ENCODE measurements at regions of chr5 and their contacts with region 1.

Region 1: GRCh38 chr5:173972925-173973615 is 15.9 kb upstream of the C5orf47 start:
- DNase-seq: peak; percentile 91
- H3K4me3 ChIP-seq: peak overlapping the region in 1 of 2 experiments; percentile 33; a peak in 2 of 4 replicates
- H3K27ac ChIP-seq: no peak overlapping the region
- H3K4me1 ChIP-seq: peaks cover 0 to 8% of the 10 kb centered on the region in 2 experiments; a peak in 1 of 4 replicates
- H3K27me3 ChIP-seq: no peaks in the 10 kb centered on the region
- CTCF ChIP-seq: peak; percentile 83
- EP300 ChIP-seq: no peak
- RAD21 ChIP-seq: peak; percentile 96

Region 2: DNA sequence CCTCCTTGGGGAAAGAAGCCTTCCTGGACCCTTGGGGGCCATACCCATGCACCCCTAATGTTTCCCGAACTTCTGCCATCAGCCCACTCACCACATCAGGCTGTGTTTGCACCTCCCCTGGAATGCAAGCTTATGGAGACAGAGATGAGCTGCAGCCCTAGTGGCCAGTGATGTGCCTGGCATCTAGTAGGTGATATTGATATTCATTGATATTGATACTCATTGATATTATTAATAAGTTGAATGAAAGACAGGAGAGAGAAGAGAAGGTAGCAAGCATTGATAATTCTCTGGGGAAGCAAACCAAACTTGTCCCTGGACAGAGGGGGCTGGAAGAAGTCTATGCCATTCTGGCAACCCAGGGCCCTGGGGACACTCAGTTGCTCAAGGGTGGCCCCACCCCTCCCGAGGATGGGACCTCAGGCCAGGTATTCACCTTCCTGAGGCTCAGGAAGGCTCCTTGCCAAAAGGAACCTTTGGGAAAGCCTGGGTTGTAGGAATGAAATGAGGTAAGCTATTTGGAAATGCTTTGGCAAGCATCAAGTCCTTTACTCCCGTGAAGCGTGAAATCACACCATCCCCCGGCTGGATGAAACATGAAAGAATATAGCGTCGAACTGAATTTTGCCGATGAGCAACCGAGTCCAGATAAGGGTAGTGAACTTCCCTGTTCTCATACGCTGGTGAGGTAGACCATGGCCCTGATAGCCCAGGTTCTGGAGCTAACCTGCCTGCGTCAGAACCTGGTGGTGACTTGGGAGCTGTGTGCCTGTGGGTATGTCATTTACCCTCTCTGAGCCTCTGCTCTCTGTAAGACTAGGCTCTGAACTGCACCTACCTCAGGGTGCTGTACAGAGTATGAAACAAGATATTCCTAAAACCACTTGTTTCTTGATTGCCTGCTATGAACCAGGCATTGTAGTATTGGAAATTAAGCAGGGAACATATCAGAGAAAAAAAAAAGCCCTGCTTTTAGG is 251.5 kb before region 1 on chr5:
- CTCF ChIA-PET with region 1: interaction called, 13 read pairs
- POLR2A ChIA-PET with region 1: interaction called, 3 read pairs
- DNase-seq: no peak
- H3K4me3 ChIP-seq: no peak overlapping the region
- H3K27ac ChIP-seq: peak overlapping the region in 1 of 2 experiments; percentile 95; a peak in 2 of 4 replicates
- H3K4me1 ChIP-seq: peaks cover 0 to 50% of the 10 kb centered on the region in 2 experiments; a peak in 2 of 4 replicates
- H3K27me3 ChIP-seq: no peaks in the 10 kb centered on the region; the same call in 1 of the 2 replicates
- CTCF ChIP-seq: peak; percentile 17; the same call in 1 of the 2 replicates
- EP300 ChIP-seq: no peak
- RAD21 ChIP-seq: no peak

Region 3: GRCh38 chr5:173984218-173984617 is 11.1 kb after region 1 on chr5:
- CTCF ChIA-PET with region 1: interaction called, 15 read pairs
- POLR2A ChIA-PET with region 1: no interaction called
- DNase-seq: peak; percentile 46
- H3K4me3 ChIP-seq: peak overlapping the region in 1 of 2 experiments; percentile 12; a peak in 1 of 4 replicates
- H3K27ac ChIP-seq: no peak overlapping the region
- H3K4me1 ChIP-seq: no peaks in the 10 kb centered on the region
- H3K27me3 ChIP-seq: peaks cover 15% of the 10 kb centered on the region; the same call in 1 of the 2 replicates
- CTCF ChIP-seq: peak; percentile 35; the same call in 1 of the 2 replicates
- EP300 ChIP-seq: no peak
- RAD21 ChIP-seq: peak; percentile 66

Measured in SK-N-SH (cell line).